ENCODE measurements at regions of chr3 and their contacts with region 1.

Region 1: DNA sequence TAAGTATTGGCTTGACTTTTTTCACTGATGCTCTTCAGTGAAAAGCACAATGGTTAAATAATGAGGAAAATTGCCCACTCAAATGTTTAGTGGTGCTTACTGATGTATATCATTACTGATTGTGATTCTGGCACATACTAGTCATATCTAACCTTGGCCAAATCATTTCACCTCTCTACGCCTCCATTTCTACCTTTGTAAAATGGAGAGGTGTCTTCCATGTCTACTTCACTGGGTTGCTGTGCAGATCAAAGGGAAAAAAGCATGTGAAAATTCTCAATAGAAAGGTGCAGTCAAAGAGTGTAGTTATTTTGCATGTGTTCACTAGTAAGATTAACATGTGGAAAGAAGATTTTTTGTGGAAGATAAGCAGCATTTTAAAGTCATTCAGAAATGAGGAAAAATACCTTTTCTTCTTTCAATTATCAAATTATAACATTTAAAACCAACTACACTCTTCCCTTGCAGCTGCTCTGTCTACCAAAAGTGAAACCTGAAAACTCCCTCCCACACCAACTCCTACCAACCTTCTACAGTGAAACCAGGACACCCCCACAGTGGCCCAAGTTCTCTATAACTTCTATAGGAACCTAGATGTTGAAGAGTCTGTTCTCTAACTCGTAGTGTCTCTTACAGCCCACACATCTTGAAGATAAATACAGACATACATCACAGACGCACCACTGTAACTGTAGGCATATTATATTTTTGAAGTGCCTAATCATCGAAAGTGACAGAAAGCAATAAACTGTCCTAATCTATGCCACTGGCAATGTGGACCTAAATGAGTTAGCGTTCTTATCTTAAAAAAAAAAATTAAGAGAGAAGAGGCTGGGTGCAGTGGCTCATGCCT is 1.4 kb downstream of the CD200R1 start:
- DNase-seq: peak; percentile 54
- H3K4me3 Mint-ChIP-seq: peak overlapping the region; percentile 89
- H3K27ac Mint-ChIP-seq: peak overlapping the region; percentile 87
- H3K4me1 Mint-ChIP-seq: peaks cover 83% of the 10 kb centered on the region
- H3K27me3 Mint-ChIP-seq: no peaks in the 10 kb centered on the region

Region 2: GRCh38 chr3:111260878-111261277 is 1712.7 kb before region 1 on chr3:
- intact Hi-C with region 1: loop called (anchors 1 kb)
- DNase-seq: no peak
- H3K4me3 Mint-ChIP-seq: peak overlapping the region; percentile 5
- H3K27ac Mint-ChIP-seq: peak overlapping the region; percentile 51
- H3K4me1 Mint-ChIP-seq: peaks cover 28% of the 10 kb centered on the region
- H3K27me3 Mint-ChIP-seq: peaks cover 7% of the 10 kb centered on the region

Region 3: GRCh38 chr3:112561731-112562688 is 411.5 kb before region 1 on chr3 and contains the starts of genes ATG3 and SLC35A5:
- intact Hi-C with region 1: loop called (anchors 1 kb)
- DNase-seq: peak; percentile 98
- H3K4me3 Mint-ChIP-seq: peak within 1 kb of the TSS; percentile 93
- H3K27ac Mint-ChIP-seq: peak within 1 kb of the TSS; percentile 99
- H3K4me1 Mint-ChIP-seq: peaks cover 31% of the 10 kb centered on the region
- H3K27me3 Mint-ChIP-seq: no peaks in the 10 kb centered on the region
- total RNA-seq, gene ATG3: 66.2 and 69.8 TPM in 2 replicates
- total RNA-seq, gene SLC35A5: 14.9 and 15.5 TPM in 2 replicates

Region 4: DNA sequence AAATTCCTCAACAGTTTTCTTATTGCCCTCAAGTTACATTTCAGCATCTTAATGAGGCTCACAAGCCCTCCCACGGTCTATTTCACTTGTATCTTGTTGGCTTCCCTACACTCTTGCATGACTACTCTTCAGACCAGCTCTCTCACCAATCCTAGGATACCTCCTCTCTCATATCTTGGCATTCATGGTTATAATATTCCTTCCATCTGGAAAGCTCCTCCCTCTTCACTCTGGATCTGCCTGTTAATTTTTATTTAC is 324.1 kb before region 1 on chr3:
- intact Hi-C with region 1: no loop called
- DNase-seq: no peak
- H3K4me3 Mint-ChIP-seq: no peak overlapping the region
- H3K27ac Mint-ChIP-seq: peak overlapping the region; percentile 19
- H3K4me1 Mint-ChIP-seq: peaks cover 30% of the 10 kb centered on the region
- H3K27me3 Mint-ChIP-seq: peaks cover 5% of the 10 kb centered on the region

Region 5: DNA sequence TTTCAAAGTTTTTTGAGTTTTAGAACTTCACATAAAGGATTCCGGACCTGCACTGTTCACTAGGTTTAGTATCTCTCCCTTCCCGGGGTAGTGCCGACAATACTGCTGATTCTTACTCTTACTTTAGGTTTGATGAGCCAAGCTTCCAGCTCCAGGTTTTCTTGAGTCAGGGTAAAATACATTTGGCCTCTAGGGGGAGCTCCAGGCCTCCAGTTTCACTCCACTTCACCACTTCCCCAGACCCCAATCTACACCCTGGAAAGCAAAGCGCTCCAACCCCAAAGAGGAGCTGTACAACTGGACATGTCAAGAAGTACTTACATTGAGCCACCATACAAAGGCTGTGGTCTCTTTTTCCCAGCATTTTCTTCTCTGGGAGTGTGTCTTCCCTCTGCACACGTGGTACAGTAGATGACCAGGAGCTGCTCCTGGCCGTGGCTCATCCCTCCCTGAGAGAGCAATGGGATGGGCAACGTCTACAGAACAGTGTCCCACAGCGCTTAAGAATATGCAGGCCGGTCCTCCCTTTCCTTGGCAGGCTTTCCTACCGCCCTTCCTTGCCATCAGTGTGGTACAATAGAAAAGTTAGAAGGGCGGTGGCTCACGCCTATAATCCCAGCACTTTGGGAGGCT is 238.7 kb before region 1 on chr3:
- intact Hi-C with region 1: loop called (anchors 1 kb)
- DNase-seq: peak; percentile 43
- H3K4me3 Mint-ChIP-seq: no peak overlapping the region
- H3K27ac Mint-ChIP-seq: no peak overlapping the region
- H3K4me1 Mint-ChIP-seq: peaks cover 47% of the 10 kb centered on the region
- H3K27me3 Mint-ChIP-seq: peaks cover 2% of the 10 kb centered on the region

Region 6: GRCh38 chr3:112984485-112984884 is 10.9 kb after region 1 on chr3:
- intact Hi-C with region 1: loop called (anchors 1 kb)
- DNase-seq: no peak
- H3K4me3 Mint-ChIP-seq: no peak overlapping the region
- H3K27ac Mint-ChIP-seq: no peak overlapping the region
- H3K4me1 Mint-ChIP-seq: peaks cover 58% of the 10 kb centered on the region
- H3K27me3 Mint-ChIP-seq: no peaks in the 10 kb centered on the region

Region 7: DNA sequence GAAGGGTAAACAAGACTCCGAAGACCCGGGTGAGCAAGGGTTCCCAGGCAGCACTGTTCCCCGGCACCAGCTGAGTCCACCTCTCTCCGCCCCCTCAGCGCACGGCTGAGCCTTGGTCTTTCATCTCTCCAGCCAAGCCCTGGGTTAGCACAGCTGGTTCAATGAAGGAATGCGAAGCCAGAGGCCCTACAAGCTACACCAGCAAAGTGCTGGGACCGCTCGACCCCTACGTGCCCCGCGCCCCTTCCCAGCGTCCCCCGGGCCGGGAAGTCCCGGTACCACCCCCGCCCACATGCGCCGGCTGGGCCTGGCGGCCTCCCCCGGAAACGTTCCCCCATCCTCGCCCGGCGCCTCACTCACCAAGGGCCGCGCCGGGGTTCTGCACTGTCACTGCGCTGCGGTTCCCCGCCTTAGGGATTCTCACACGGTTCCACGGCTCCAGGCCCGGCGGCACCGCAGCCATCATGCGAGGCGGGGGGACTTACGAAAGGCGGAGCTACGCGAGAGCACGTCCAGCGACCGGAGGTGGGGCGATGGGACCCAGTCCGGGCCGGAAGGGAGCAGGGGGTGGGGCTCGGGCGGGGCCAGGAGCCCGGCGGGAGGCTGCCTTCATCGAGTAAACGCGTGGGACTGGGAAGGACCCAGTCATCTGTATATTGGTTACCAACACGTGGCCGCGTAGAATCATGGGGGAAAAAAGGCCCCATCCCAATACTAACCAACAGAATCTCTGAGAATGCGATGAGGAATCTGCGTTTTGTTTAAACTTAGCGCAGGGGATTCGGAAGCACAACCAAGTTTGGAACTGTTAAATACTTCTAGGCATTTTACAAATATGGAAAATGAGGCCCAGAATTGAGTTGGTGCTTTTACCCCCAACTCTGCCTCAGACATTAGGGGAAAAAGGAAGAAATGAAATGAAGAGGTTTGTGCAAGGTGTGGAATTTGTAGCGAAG is 45.9 kb after region 1 on chr3:
- intact Hi-C with region 1: loop called (anchors 1 kb)
- DNase-seq: peak; percentile 77
- H3K4me3 Mint-ChIP-seq: peak overlapping the region; percentile 91
- H3K27ac Mint-ChIP-seq: peak overlapping the region; percentile 89
- H3K4me1 Mint-ChIP-seq: peaks cover 58% of the 10 kb centered on the region
- H3K27me3 Mint-ChIP-seq: no peaks in the 10 kb centered on the region